ENCODE measurements at regions of chr10 and their contacts with region 1.

Region 1: DNA sequence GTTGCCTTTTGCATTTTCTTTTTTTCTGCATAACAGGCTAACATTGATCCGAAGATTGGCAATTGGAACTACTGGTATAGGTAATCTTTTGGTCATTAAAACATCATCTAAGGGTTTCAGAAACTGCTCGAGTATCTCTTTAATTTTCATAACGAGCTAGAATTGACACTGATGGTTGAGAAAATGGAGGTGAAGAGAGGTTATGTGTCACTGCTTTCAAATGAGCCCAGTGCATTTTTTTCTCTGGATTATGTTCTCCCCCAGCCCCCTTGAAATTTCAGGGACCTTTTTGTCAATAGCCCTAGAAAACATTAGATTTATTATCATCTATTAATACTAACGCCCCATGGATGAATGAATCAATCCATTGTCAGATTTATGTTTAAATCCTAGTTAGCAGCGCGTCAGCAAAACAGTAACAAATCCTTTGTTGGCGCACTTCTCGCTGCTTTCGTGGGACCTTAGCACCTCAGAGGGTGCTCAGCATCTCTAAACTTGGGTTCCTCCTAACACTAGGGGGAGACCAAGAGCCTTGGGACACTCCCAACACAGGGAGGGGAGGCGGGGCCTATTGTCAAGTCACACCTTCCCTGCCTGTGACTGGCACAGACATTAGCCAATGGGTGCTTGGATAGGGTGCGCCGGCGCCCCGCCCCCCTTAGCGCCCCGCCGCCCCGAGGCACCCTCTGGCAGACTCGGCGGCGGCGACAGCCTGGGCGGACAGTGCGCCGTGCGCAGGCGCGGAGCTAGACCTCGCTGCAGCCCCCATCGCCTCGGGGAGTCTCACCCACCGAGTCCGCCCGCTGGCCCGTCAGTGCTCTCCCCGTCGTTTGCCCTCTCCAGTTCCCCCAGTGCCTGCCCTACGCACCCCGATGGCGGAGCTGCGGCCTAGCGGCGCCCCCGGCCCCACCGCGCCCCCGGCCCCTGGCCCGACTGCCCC is at the start of gene SUFU:
- DNase-seq: peak; percentile 99
- ATAC-seq: peak; percentile 78
- H3K4me3 Mint-ChIP-seq: no peak within 1 kb of the TSS
- H3K27ac Mint-ChIP-seq: peak within 1 kb of the TSS; percentile 82
- H3K4me1 Mint-ChIP-seq: peaks cover 28% of the 10 kb centered on the region
- H3K27me3 Mint-ChIP-seq: no peaks in the 10 kb centered on the region
- total RNA-seq, gene SUFU: 8.4 to 9.5 TPM

Region 2: DNA sequence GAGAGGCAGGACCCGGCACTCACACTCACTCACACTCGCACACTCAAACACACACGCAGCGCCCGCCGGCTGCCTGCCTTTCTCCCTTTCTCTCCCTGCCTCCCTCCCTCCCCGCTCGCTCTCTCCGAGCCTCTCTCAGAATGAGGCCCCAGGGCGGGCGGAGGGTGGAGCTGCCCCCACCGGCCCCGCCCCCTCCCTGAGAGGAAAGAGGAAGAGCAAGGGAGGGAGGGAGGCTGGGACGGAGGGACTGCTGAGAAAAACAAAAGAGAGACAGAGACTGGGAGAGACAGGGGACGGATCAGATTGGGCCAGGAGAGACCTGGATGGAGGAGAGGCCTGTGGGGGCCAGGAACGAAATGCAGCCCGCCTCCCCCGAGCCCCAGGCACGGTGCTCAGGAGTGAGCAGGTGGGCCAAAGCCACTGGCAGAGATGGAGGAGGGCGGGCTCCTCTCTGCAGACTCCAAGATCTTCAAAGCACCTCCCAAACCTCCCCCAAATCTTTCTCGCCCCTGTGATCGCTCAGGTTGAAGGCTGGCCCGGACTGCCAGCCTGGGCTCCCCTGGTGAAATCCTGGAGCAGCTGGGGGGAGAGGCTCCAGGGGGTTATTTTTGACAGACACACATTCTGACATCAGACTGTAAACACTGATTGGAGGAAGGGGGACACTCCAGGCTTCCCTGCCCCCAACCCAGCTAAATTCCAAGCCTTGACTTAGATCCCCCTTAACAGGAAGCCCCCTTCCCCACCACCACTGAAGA is 388.5 kb before region 1 on chr10:
- CTCF ChIA-PET with region 1: no interaction called
- POLR2A ChIA-PET with region 1: no interaction called
- intact Hi-C with region 1: loop called in 1 of 2 experiments (anchors 5 kb)
- DNase-seq: peak; percentile 95
- ATAC-seq: peak; percentile 60
- H3K4me3 Mint-ChIP-seq: peak overlapping the region; percentile 81
- H3K27ac Mint-ChIP-seq: peak overlapping the region; percentile 97
- H3K4me1 Mint-ChIP-seq: peaks cover 55% of the 10 kb centered on the region
- H3K27me3 Mint-ChIP-seq: no peaks in the 10 kb centered on the region

Region 3: DNA sequence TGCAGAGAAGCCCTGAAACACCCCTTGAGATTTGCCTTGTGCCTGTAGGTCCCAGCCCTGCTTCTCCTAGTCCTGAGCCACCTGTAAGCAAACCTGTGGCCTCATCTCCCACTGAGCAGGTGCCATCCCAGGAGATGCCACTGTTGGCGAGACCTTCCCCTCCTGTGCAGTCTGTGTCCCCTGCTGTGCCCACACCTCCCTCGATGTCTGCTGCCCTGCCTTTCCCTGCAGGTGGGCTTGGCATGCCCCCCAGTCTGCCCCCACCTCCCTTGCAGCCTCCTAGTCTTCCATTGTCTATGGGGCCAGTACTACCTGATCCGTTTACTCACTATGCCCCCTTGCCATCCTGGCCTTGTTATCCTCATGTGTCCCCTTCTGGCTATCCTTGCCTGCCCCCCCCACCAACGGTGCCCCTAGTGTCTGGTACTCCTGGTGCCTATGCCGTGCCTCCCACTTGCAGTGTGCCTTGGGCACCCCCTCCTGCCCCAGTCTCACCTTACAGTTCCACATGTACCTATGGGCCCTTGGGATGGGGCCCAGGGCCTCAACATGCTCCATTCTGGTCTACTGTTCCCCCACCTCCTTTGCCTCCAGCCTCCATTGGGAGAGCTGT is 362.5 kb before region 1 on chr10:
- CTCF ChIA-PET with region 1: no interaction called
- POLR2A ChIA-PET with region 1: no interaction called
- intact Hi-C with region 1: no loop called
- DNase-seq: no peak
- ATAC-seq: no peak
- H3K4me3 Mint-ChIP-seq: no peak overlapping the region
- H3K27ac Mint-ChIP-seq: no peak overlapping the region
- H3K4me1 Mint-ChIP-seq: peaks cover 14% of the 10 kb centered on the region
- H3K27me3 Mint-ChIP-seq: no peaks in the 10 kb centered on the region

Region 4: DNA sequence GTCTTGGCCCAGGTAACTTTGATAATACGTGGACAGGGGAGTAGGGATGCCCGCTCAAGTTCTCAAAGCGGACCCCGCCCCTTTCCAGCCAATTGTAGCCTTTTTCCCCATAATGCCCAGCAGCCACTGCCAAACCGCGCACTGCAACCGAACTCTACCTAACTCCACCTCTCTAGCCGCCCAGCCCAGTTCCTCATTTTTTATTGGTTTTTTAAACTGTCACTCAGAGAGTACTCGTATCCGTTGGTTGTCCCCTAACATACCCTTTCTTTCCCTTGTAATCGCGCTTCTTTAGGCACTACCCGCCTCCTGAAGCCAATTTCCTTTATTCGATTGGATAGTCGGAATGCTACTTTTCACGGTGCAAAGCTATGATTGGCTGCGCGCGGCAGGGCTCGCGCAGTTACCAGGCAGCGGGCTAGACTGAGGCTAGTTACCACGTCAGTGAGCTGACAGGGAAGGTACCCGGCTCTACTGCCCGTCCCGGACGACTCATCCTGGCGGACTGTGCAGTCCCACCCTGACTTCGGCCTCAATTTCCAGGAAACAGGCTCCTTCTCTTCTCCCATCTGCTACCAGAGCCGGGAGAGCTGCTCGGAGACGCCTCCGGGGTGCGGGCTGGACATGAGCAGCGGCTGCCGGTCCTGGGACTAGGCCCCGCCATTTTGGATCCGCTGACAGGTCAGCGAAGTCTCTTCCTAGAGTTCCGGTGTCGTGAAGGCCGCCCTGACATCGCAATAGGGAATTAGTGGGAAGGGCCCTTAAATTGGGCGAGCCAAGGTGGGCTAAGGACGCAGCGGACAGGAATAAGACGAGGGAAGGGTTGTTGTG is 258.2 kb before region 1 on chr10 and contains the start of gene GBF1:
- CTCF ChIA-PET with region 1: interaction called, 4 read pairs
- POLR2A ChIA-PET with region 1: no interaction called
- intact Hi-C with region 1: loop called (anchors 1 kb)
- DNase-seq: peak; percentile 94
- ATAC-seq: peak; percentile 90
- H3K4me3 Mint-ChIP-seq: peak within 1 kb of the TSS; percentile 98
- H3K27ac Mint-ChIP-seq: peak within 1 kb of the TSS; percentile 81
- H3K4me1 Mint-ChIP-seq: peaks cover 44% of the 10 kb centered on the region
- H3K27me3 Mint-ChIP-seq: peaks cover 18% of the 10 kb centered on the region
- total RNA-seq, gene GBF1: 33.1 to 37.5 TPM

Region 5: GRCh38 chr10:102432162-102432950 is 71.2 kb before region 1 on chr10 and contains the start of gene CUEDC2:
- CTCF ChIA-PET with region 1: interaction called, 3 read pairs
- POLR2A ChIA-PET with region 1: no interaction called
- intact Hi-C with region 1: loop called (anchors 1 kb)
- DNase-seq: peak; percentile 99
- ATAC-seq: peak; percentile 94
- H3K4me3 Mint-ChIP-seq: peak within 1 kb of the TSS; percentile 85
- H3K27ac Mint-ChIP-seq: peak within 1 kb of the TSS; percentile 94
- H3K4me1 Mint-ChIP-seq: peaks cover 42% of the 10 kb centered on the region
- H3K27me3 Mint-ChIP-seq: no peaks in the 10 kb centered on the region
- total RNA-seq, gene CUEDC2: 60.8 to 72.7 TPM

Region 6: GRCh38 chr10:102532126-102532525 is 28.6 kb after region 1 on chr10:
- CTCF ChIA-PET with region 1: no interaction called
- POLR2A ChIA-PET with region 1: no interaction called
- intact Hi-C with region 1: no loop called
- DNase-seq: no peak
- ATAC-seq: no peak
- H3K4me3 Mint-ChIP-seq: no peak overlapping the region
- H3K27ac Mint-ChIP-seq: no peak overlapping the region
- H3K4me1 Mint-ChIP-seq: peaks cover 2% of the 10 kb centered on the region
- H3K27me3 Mint-ChIP-seq: no peaks in the 10 kb centered on the region

Region 7: DNA sequence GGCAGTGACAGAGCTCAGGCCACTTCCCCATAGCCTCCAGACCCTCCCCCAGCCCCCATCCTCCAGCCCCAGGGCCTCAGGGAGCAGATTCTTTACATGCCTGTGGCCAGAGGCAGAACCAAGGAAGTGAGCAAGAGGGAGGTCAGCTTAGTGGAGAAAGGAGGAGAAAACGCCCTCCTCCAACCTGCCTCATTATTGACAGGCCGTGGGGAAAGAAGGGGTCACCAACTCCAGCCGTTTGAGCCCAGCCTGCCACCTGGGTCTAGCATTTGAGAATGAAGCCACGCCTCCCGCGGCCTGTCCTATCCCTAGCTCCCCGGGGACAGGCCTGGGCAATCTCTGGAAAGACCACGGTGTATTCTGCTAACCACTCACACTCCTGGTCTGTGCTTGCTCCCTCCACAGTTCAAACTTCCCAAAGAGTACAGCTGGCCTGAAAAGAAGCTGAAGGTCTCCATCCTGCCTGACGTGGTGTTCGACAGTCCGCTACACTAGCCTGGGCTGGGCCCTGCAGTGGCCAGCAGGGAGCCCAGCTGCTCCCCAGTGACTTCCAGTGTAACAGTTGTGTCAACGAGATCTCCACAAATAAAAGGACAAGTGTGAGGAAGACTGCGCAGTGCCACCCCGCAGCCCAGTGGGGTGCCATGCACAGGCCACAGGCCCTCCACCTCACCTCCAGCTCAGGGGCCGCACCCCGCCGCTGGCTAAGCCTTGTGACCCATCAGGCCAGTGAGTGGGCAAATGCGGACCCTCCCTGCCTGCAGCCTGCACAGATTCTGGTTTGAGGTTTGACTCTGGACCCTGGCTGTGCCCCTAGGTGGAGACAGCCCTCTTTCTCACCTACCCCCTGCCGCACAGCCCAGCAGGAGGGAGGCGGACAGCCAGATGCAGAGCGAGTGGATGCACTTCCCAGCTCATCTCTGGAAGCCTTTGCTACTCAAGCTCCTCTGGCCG is 126.4 kb after region 1 on chr10:
- CTCF ChIA-PET with region 1: no interaction called
- POLR2A ChIA-PET with region 1: no interaction called
- intact Hi-C with region 1: no loop called
- DNase-seq: no peak
- ATAC-seq: no peak
- H3K4me3 Mint-ChIP-seq: no peak overlapping the region
- H3K27ac Mint-ChIP-seq: no peak overlapping the region
- H3K4me1 Mint-ChIP-seq: peaks cover 37% of the 10 kb centered on the region
- H3K27me3 Mint-ChIP-seq: no peaks in the 10 kb centered on the region

Region 8: DNA sequence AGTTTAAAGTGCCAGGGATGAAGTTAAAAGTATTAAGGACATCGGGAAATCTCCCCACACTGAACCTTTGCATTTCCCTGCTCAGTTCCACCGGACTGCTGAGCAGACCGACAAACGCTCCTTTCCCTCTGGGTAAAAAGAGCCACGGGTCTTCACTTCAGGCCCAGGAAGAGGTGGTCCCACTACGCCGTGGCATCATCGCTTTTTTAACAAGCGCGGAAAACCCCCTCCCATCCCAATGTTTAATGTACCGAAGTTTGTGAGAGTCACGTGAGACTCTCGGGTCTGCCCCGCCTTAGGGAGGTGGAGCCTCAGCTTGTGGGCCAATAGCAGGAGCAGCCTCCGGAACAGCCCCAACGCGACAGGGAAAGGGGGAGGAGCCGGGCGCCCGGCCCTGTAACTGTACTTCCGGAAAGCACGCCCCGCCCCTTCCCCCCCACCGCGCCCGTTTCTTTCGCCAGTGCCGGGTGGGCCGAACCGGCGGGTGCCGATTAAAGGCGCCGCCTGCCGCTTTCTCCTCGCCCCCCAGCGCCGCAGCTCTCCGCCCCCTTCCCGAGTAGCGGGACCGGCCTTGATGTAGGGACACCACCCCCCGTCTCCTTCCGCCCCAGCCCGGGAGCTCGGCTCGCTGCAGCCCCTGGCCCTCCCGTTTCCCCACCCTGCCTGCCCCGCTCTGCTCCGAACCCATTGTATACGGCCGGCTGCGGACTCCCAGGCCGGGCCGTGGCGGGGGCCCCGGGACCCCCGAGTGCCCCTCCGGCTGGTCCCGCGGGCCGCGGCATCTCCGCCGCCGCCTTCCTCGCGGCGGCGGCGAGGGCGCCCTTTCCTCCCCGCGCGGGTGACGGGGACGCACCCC is 138.6 kb after region 1 on chr10:
- CTCF ChIA-PET with region 1: interaction called, 7 read pairs
- POLR2A ChIA-PET with region 1: no interaction called
- intact Hi-C with region 1: loop called (anchors 1 kb)
- DNase-seq: peak; percentile 99
- ATAC-seq: peak; percentile 72
- H3K4me3 Mint-ChIP-seq: peak overlapping the region; percentile 84
- H3K27ac Mint-ChIP-seq: peak overlapping the region; percentile 92
- H3K4me1 Mint-ChIP-seq: peaks cover 19% of the 10 kb centered on the region
- H3K27me3 Mint-ChIP-seq: no peaks in the 10 kb centered on the region

Region 9: GRCh38 chr10:102673819-102674511 is 170.4 kb after region 1 on chr10:
- CTCF ChIA-PET with region 1: no interaction called
- POLR2A ChIA-PET with region 1: no interaction called
- intact Hi-C with region 1: no loop called
- DNase-seq: peak; percentile 81
- ATAC-seq: peak; percentile 93
- H3K4me3 Mint-ChIP-seq: peak overlapping the region; percentile 63
- H3K27ac Mint-ChIP-seq: peak overlapping the region; percentile 55
- H3K4me1 Mint-ChIP-seq: peaks cover 43% of the 10 kb centered on the region
- H3K27me3 Mint-ChIP-seq: no peaks in the 10 kb centered on the region

Region 10: DNA sequence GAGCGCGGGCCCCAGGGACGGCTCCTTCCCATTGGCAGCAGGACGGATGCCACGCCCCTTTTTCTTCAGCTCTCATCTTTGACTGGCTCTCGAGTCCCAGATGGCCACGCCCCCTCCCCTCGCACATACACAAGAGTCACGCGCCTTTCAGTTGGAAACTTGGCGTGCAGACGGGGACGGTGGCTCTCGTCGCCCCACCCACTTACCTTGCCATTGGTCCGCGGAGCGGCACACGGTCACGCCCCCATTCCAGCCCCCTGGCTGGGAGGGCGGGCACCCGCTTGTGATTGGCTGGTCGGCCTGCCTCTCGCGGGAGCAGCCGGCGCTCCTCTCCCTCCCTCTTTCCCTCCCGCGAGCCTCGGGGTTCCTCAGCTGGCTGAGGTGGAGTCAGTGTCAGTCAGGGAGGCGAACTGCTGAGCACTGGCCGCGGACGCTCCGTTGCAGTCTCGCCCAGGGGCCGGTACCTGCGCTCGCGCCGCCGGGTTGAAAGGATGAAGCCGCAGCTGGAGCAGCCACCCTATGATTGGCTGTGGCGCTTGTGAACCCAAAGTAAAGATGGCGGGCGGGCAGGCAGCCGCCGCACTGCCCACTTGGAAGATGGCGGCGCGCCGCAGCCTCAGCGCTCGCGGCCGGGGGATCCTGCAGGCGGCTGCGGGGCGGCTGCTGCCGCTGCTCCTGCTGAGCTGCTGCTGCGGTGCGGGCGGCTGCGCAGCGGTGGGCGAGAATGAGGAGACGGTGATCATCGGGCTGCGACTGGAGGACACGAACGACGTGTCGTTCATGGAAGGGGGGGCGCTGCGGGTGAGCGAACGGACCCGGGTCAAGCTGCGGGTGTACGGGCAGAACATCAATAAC is 414.6 kb after region 1 on chr10 and contains the start of gene CNNM2:
- CTCF ChIA-PET with region 1: interaction called, 3 read pairs
- POLR2A ChIA-PET with region 1: no interaction called
- intact Hi-C with region 1: loop called in 1 of 2 experiments (anchors 1 kb)
- DNase-seq: peak; percentile 100
- ATAC-seq: peak; percentile 93
- H3K4me3 Mint-ChIP-seq: peak within 1 kb of the TSS; percentile 83
- H3K27ac Mint-ChIP-seq: peak within 1 kb of the TSS; percentile 88
- H3K4me1 Mint-ChIP-seq: peaks cover 53% of the 10 kb centered on the region
- H3K27me3 Mint-ChIP-seq: peaks cover 14% of the 10 kb centered on the region
- total RNA-seq, gene CNNM2: 4.2 to 4.5 TPM

Measured in activated CD4-positive, alpha-beta T cell treated with anti-CD3 and anti-CD28 coated beads for 36 hours (primary cell).